ENCODE measurements at regions of chr17 and their contacts with region 1.

Region 1: GRCh38 chr17:74961657-74962490 is 10.7 kb downstream of the HID1 start:
- DNase-seq: peak in 1 of 2 donors; percentile 91
- H3K4me3 ChIP-seq: no peak overlapping the region
- H3K27ac ChIP-seq: no peak overlapping the region
- H3K4me1 ChIP-seq: no peaks in the 10 kb centered on the region
- H3K27me3 ChIP-seq: no peaks in the 10 kb centered on the region
- CTCF ChIP-seq: peak; percentile 53 to 84 (median 77)

Region 2: GRCh38 chr17:74833501-74834377 is 128.1 kb before region 1 on chr17:
- intact Hi-C with region 1: no loop called
- DNase-seq: no peak
- H3K4me3 ChIP-seq: no peak overlapping the region
- H3K27ac ChIP-seq: no peak overlapping the region
- H3K4me1 ChIP-seq: no peaks in the 10 kb centered on the region
- H3K27me3 ChIP-seq: no peaks in the 10 kb centered on the region
- CTCF ChIP-seq: no peak

Region 3: DNA sequence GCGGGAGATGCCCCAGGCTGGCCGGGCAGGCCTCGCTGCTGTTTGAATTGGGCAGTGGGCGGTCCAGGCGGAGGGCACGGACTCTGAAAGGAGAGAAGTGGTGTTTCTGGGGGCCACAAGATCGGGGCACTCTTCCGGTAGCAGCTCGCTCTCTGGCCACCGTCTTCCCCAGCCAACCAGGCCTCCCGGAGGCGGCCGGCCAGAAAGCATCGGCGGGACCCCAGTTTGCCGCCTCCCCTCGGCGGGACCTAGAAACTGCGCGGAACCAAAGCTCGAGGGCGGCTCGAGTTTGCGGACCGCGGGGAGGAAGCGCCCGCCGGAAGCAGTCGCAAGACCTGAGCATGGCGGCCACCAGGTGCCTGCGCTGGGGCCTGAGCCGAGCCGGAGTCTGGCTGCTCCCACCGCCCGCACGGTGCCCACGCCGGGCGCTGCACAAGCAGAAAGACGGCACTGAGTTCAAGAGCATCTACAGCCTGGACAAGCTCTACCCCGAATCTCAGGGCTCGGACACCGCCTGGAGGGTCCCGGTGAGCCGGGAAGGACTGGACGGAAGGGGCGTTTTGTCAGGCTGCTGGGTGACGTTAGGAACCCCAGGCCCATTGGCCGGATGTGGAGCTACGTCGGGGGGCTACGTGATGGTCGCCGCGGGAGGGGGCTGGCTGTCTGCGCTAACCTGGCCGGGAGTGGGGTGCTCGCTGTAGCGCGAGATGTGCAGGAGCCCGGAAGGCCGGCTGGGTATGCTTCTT is 50.6 kb after region 1 on chr17 and contains the start of gene MRPL58:
- intact Hi-C with region 1: loop called (anchors 1 kb)
- DNase-seq: peak in 1 of 2 donors; percentile 89
- H3K4me3 ChIP-seq: peak within 1 kb of the TSS; percentile 68 to 88
- H3K27ac ChIP-seq: peak within 1 kb of the TSS; percentile 83 to 91
- H3K4me1 ChIP-seq: peaks cover 4 to 18% of the 10 kb centered on the region in 2 donors
- H3K27me3 ChIP-seq: no peaks in the 10 kb centered on the region
- CTCF ChIP-seq: peak; percentile 59 to 66 (median 63)
- total RNA-seq, gene MRPL58: 14.5 TPM

Region 4: GRCh38 chr17:75046582-75047289 is 84.9 kb after region 1 on chr17 and contains the starts of genes ATP5PD and KCTD2:
- intact Hi-C with region 1: no loop called
- DNase-seq: peak; percentile 88 to 98
- H3K4me3 ChIP-seq: peak within 1 kb of the TSS; percentile 64 to 74
- H3K27ac ChIP-seq: peak within 1 kb of the TSS; percentile 90
- H3K4me1 ChIP-seq: peaks cover 9 to 13% of the 10 kb centered on the region in 2 donors
- H3K27me3 ChIP-seq: no peaks in the 10 kb centered on the region
- CTCF ChIP-seq: no peak
- total RNA-seq, gene ATP5PD: 133 TPM
- total RNA-seq, gene KCTD2: 31.4 TPM

Region 5: GRCh38 chr17:75199886-75200618 is 238.2 kb after region 1 on chr17:
- intact Hi-C with region 1: loop called (anchors 2 kb)
- DNase-seq: no peak
- H3K4me3 ChIP-seq: no peak overlapping the region
- H3K27ac ChIP-seq: no peak overlapping the region
- H3K4me1 ChIP-seq: no peaks in the 10 kb centered on the region
- H3K27me3 ChIP-seq: no peaks in the 10 kb centered on the region
- CTCF ChIP-seq: no peak

Measured in ascending aorta (tissue), 2 donors.